ENCODE measurements at regions of chr6 and their contacts with region 1.

Region 1: GRCh38 chr6:87220997-87221396 is 65.6 kb downstream of the ZNF292 start:
- DNase-seq: no peak
- H3K4me3 Mint-ChIP-seq: no peak overlapping the region
- H3K27ac Mint-ChIP-seq: no peak overlapping the region
- H3K4me1 Mint-ChIP-seq: no peaks in the 10 kb centered on the region
- H3K27me3 Mint-ChIP-seq: no peaks in the 10 kb centered on the region

Region 2: GRCh38 chr6:87203448-87204023 is 17.5 kb before region 1 on chr6:
- intact Hi-C with region 1: loop called (anchors 2 kb)
- DNase-seq: no peak
- H3K4me3 Mint-ChIP-seq: no peak overlapping the region
- H3K27ac Mint-ChIP-seq: peak overlapping the region; percentile 56
- H3K4me1 Mint-ChIP-seq: peaks cover 50% of the 10 kb centered on the region
- H3K27me3 Mint-ChIP-seq: no peaks in the 10 kb centered on the region